HepG2 (cell line): ENCODE measurements at regions of chr10 and their contacts with region 1.

Region 1: GRCh38 chr10:99779335-99779734 is 3.1 kb upstream of the ABCC2 start:
- DNase-seq: peak; percentile 76
- ATAC-seq: peak; percentile 27
- H3K4me3 ChIP-seq: peak overlapping the region; percentile 10 to 61 (median 43); a peak in 4 of 6 replicates
- H3K27ac ChIP-seq: peak overlapping the region; percentile 95
- H3K4me1 ChIP-seq: peaks cover 71% of the 10 kb centered on the region
- H3K27me3 ChIP-seq: no peaks in the 10 kb centered on the region; a peak in 1 of 5 replicates
- CTCF ChIP-seq: no peak
- EP300 ChIP-seq: no peak; a peak in 1 of 4 replicates
- POLR2A ChIP-seq: no peak
- RAD21 ChIP-seq: no peak

Region 2: DNA sequence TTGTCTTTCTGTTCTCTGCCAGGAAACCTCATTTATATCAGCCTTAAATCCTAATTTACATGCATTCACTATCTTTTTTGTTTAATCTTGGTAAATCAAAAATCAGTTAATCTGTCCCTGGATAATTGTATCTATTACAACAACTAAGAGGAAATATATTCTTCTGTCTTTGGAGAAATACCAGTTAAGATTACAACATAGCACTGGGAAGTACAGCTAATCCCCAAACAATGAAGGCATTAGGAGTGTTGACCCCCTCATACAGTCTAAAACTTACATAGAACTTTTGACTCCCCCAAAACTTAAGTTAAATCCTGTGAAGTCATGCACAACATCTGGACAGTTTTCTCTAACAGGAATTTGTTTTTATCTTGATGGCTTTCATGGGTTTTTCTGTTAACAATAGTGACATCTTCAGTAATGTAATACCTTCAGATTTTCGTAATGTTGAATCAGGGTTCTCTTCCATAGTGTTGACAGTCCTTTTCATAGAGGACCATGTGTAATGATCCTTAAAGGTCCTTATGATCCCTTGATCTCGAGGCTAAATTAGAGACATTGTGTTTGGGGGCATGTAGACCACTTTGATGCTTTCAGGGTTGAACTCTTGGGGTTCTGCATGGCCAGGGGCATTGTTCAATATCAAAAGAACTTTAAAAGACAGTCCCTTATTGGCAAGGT is 21.0 kb before region 1 on chr10:
- CTCF ChIA-PET with region 1: no interaction called
- POLR2A ChIA-PET with region 1: interaction called, 12 read pairs
- in situ Hi-C with region 1: no loop called
- intact Hi-C with region 1: loop called (anchors 2 kb)
- DNase-seq: no peak
- ATAC-seq: no peak
- H3K4me3 ChIP-seq: no peak overlapping the region
- H3K27ac ChIP-seq: no peak overlapping the region
- H3K4me1 ChIP-seq: peaks cover 60% of the 10 kb centered on the region
- H3K27me3 ChIP-seq: no peaks in the 10 kb centered on the region
- CTCF ChIP-seq: no peak
- EP300 ChIP-seq: no peak
- POLR2A ChIP-seq: no peak
- RAD21 ChIP-seq: no peak

Region 3: GRCh38 chr10:99768556-99768955 is 10.8 kb before region 1 on chr10:
- CTCF ChIA-PET with region 1: no interaction called
- POLR2A ChIA-PET with region 1: interaction called, 15 read pairs
- in situ Hi-C with region 1: no loop called
- intact Hi-C with region 1: no loop called
- DNase-seq: no peak
- ATAC-seq: no peak
- H3K4me3 ChIP-seq: no peak overlapping the region
- H3K27ac ChIP-seq: no peak overlapping the region
- H3K4me1 ChIP-seq: peaks cover 28% of the 10 kb centered on the region
- H3K27me3 ChIP-seq: no peaks in the 10 kb centered on the region
- CTCF ChIP-seq: no peak
- EP300 ChIP-seq: no peak
- POLR2A ChIP-seq: no peak
- RAD21 ChIP-seq: no peak